Calu3 (cell line): ENCODE measurements at regions of chr22 and their contacts with region 1.

Region 1: GRCh38 chr22:46013460-46014416 is 36.8 kb upstream of the WNT7B start:
- DNase-seq: peak; percentile 98
- H3K4me3 Mint-ChIP-seq: peak overlapping the region; percentile 89
- H3K27ac Mint-ChIP-seq: peak overlapping the region; percentile 55
- H3K4me1 Mint-ChIP-seq: no peaks in the 10 kb centered on the region
- H3K27me3 Mint-ChIP-seq: no peaks in the 10 kb centered on the region
- CTCF ChIP-seq: peak; percentile 78

Region 2: DNA sequence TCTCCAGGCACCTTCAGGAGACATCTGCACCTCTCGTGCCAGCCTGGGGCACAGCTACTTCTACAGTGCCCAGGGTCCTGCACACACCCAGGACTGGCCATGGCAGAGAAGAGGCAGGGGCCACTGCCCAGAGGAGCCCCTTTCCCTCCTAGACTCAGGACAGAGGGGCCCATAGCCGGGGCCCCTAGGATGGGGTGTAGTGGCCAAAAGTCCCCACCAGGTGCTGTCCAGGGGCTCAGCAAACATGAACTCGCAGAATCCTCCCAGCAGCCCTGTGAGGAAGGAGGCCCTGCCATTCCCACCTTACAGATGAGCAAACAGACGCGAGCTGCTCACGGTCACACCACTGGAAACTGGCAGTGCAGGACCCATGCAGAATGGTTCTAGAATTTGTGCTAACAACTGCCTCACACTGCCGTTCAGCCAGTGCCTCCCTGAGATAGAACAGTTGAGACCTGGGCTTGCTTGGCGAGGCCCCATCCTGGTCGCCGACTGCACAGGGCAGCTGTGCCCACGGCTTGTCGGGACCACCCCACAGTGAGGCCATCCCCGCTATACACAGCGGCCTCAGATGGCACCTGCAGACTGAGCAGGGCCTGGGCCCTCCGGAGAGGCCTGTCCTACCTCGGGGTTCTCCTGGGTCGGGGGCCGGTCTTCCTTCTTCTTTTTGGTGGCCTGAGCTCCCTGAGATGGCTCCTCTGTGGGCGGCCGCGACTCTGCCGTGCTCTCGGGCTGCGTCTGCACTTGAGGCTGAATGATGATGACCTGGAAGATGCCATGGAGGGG is 1100.3 kb before region 1 on chr22:
- CTCF ChIA-PET with region 1: no interaction called
- intact Hi-C with region 1: no loop called
- DNase-seq: no peak
- H3K4me3 Mint-ChIP-seq: no peak overlapping the region
- H3K27ac Mint-ChIP-seq: no peak overlapping the region
- H3K4me1 Mint-ChIP-seq: no peaks in the 10 kb centered on the region
- H3K27me3 Mint-ChIP-seq: peaks cover 90% of the 10 kb centered on the region
- CTCF ChIP-seq: peak; percentile 22

Region 3: GRCh38 chr22:46035742-46036557 is 22.2 kb after region 1 on chr22:
- CTCF ChIA-PET with region 1: interaction called, 20 read pairs
- intact Hi-C with region 1: no loop called
- DNase-seq: peak; percentile 99
- H3K4me3 Mint-ChIP-seq: peak overlapping the region; percentile 83
- H3K27ac Mint-ChIP-seq: no peak overlapping the region
- H3K4me1 Mint-ChIP-seq: no peaks in the 10 kb centered on the region
- H3K27me3 Mint-ChIP-seq: no peaks in the 10 kb centered on the region
- CTCF ChIP-seq: no peak

Region 4: DNA sequence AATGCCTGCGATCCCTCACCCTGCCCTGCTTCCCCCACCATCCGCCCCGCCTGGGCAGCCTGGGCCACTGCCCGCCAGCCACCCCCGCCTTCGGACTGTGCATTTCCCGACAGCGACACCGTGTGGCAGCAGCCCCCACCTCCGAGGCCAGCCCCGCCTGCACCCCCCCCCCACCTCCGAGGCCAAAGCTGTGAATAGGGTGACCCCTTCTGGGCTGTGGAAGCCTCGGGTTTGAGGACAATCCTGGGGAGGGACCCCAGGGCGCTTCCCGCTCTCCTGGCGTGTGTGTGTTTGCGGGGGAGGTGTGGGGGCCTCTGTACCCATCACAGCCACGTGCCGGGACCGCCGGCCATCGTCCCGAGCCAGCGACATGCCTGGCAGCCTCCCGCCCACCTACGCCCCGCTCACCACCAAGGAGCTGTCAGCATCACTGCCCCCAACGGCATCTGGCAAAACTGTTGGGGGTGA is 102.8 kb after region 1 on chr22:
- CTCF ChIA-PET with region 1: interaction called, 12 read pairs
- intact Hi-C with region 1: no loop called
- DNase-seq: peak; percentile 95
- H3K4me3 Mint-ChIP-seq: no peak overlapping the region
- H3K27ac Mint-ChIP-seq: peak overlapping the region; percentile 85
- H3K4me1 Mint-ChIP-seq: peaks cover 26% of the 10 kb centered on the region
- H3K27me3 Mint-ChIP-seq: no peaks in the 10 kb centered on the region
- CTCF ChIP-seq: peak; percentile 85